ENCODE measurements at regions of chr20 and their contacts with region 1.

Region 1: GRCh38 chr20:38893565-38894090 is 32.6 kb upstream of the FAM83D start:
- DNase-seq: peak; percentile 95
- H3K4me3 ChIP-seq: peak overlapping the region in 1 of 8 donors; percentile 31
- H3K27ac ChIP-seq: peak overlapping the region; percentile 59 to 88 (median 74)
- H3K4me1 ChIP-seq: peaks cover 10 to 56% (median 31%) of the 10 kb centered on the region in 6 donors
- H3K27me3 ChIP-seq: no peaks in the 10 kb centered on the region
- CTCF ChIP-seq: peak; percentile 63 to 96 (median 88)
- POLR2A ChIP-seq: no peak

Region 2: GRCh38 chr20:38751360-38751976 is 142.2 kb before region 1 on chr20:
- intact Hi-C with region 1: loop called (anchors 10 kb)
- DNase-seq: no peak
- H3K4me3 ChIP-seq: no peak overlapping the region
- H3K27ac ChIP-seq: no peak overlapping the region
- H3K4me1 ChIP-seq: peaks cover 6 to 42% (median 29%) of the 10 kb centered on the region in 6 donors
- H3K27me3 ChIP-seq: no peaks in the 10 kb centered on the region
- CTCF ChIP-seq: peak; percentile 40 to 72 (median 55)
- POLR2A ChIP-seq: no peak

Region 3: GRCh38 chr20:38805502-38805957 is 88.1 kb before region 1 on chr20 and contains the start of gene PPP1R16B:
- intact Hi-C with region 1: loop called (anchors 5 kb)
- DNase-seq: peak; percentile 96
- H3K4me3 ChIP-seq: peak within 1 kb of the TSS; percentile 70 to 95 (median 82)
- H3K27ac ChIP-seq: peak within 1 kb of the TSS; percentile 73 to 98 (median 90)
- H3K4me1 ChIP-seq: peaks cover 32 to 68% (median 61%) of the 10 kb centered on the region in 6 donors
- H3K27me3 ChIP-seq: peaks cover 0 to 28% (median 5%) of the 10 kb centered on the region in 7 donors
- CTCF ChIP-seq: no peak
- POLR2A ChIP-seq: peak in 2 of 3 donors; percentile 59 to 77
- total RNA-seq, gene PPP1R16B: 35.7 to 66.0 (median 47.4) TPM

Region 4: GRCh38 chr20:38855356-38855755 is 38.3 kb before region 1 on chr20:
- intact Hi-C with region 1: no loop called
- DNase-seq: no peak
- H3K4me3 ChIP-seq: no peak overlapping the region
- H3K27ac ChIP-seq: peak overlapping the region in 3 of 8 donors; percentile 4 to 46 (median 38)
- H3K4me1 ChIP-seq: peaks cover 12 to 68% (median 42%) of the 10 kb centered on the region in 6 donors
- H3K27me3 ChIP-seq: no peaks in the 10 kb centered on the region
- CTCF ChIP-seq: no peak
- POLR2A ChIP-seq: no peak

Region 5: GRCh38 chr20:38935285-38935684 is 41.7 kb after region 1 on chr20:
- intact Hi-C with region 1: no loop called
- DNase-seq: no peak
- H3K4me3 ChIP-seq: no peak overlapping the region
- H3K27ac ChIP-seq: no peak overlapping the region
- H3K4me1 ChIP-seq: no peaks in the 10 kb centered on the region
- H3K27me3 ChIP-seq: no peaks in the 10 kb centered on the region
- CTCF ChIP-seq: peak in 1 of 11 experiments; percentile 20
- POLR2A ChIP-seq: no peak